Activated CD4-positive, alpha-beta T cell treated with anti-CD3 and anti-CD28 coated beads for 36 hours (primary cell): ENCODE measurements at regions of chr6 and their contacts with region 1.

Region 1: DNA sequence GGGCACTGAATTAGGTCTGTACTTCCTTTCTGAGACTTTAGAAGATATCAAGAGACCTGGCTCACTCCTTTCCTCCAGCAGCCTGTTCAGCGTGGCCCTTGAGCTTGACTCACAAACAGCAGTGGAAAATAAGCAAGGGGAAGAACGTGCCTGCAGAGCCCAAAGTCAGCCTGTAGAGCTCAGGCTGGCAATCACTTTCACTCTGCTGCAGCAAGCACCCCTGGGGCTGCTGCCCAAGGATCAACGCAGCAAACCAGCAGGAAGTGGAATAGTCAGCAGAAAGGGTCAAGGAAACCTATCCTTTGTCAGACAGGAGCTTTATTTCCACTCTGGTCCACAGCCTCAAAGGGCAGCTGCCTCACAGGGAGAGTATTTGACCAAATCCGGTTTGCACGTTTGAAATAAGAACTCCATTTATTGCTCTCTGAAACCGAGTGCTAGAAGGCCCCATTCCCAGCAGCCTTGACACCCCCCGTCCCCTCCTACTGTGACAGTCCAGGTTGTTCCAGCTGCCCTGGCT is 77.4 kb downstream of the PRDM1 start:
- DNase-seq: peak; percentile 80
- ATAC-seq: peak; percentile 59
- H3K4me3 Mint-ChIP-seq: peak overlapping the region; percentile 61
- H3K27ac Mint-ChIP-seq: peak overlapping the region; percentile 89
- H3K4me1 Mint-ChIP-seq: peaks cover 49% of the 10 kb centered on the region
- H3K27me3 Mint-ChIP-seq: peaks cover 2% of the 10 kb centered on the region

Region 2: GRCh38 chr6:105898286-105898685 is 265.2 kb before region 1 on chr6:
- CTCF ChIA-PET with region 1: no interaction called
- POLR2A ChIA-PET with region 1: no interaction called
- intact Hi-C with region 1: loop called in 1 of 2 experiments (anchors 1 kb)
- DNase-seq: peak; percentile 43
- ATAC-seq: peak; percentile 62
- H3K4me3 Mint-ChIP-seq: no peak overlapping the region
- H3K27ac Mint-ChIP-seq: no peak overlapping the region
- H3K4me1 Mint-ChIP-seq: peaks cover 24% of the 10 kb centered on the region
- H3K27me3 Mint-ChIP-seq: peaks cover 4% of the 10 kb centered on the region

Region 3: DNA sequence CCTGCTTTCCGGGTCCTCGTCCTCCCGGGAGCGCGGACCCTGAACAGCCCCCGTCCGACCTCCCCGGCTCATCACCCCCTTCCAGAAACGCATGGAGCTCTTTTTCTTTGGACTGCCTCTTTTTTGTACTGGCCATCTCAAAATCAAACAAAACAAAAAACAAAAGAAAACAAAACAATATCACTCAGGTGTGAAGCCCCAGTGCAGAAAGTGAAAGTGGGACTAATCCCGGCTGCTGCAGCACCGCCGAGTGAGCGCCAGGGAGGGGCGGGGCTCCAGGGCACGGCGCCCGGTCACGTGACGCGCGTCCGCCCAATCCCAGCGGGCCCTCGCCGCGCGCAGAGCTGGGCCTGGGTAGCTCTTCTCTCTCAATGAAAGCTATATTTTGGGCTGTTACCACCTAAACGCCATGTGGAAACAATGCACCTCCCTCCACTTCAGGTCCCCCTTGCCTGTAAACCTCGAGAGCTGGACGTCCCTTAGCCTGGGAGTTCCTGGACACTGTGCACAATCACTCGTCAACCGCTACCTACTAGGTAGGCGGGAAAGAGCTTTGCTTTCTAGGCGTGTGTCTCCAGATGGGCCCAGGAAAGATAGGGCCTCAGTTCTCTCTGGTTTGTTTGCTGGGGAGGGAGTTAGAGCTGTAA is 171.1 kb before region 1 on chr6:
- CTCF ChIA-PET with region 1: interaction called, 3 read pairs
- POLR2A ChIA-PET with region 1: no interaction called
- intact Hi-C with region 1: loop called in 1 of 2 experiments (anchors 1 kb)
- DNase-seq: peak; percentile 94
- ATAC-seq: peak; percentile 93
- H3K4me3 Mint-ChIP-seq: peak overlapping the region; percentile 88
- H3K27ac Mint-ChIP-seq: peak overlapping the region; percentile 91
- H3K4me1 Mint-ChIP-seq: peaks cover 32% of the 10 kb centered on the region
- H3K27me3 Mint-ChIP-seq: peaks cover 61% of the 10 kb centered on the region

Region 4: DNA sequence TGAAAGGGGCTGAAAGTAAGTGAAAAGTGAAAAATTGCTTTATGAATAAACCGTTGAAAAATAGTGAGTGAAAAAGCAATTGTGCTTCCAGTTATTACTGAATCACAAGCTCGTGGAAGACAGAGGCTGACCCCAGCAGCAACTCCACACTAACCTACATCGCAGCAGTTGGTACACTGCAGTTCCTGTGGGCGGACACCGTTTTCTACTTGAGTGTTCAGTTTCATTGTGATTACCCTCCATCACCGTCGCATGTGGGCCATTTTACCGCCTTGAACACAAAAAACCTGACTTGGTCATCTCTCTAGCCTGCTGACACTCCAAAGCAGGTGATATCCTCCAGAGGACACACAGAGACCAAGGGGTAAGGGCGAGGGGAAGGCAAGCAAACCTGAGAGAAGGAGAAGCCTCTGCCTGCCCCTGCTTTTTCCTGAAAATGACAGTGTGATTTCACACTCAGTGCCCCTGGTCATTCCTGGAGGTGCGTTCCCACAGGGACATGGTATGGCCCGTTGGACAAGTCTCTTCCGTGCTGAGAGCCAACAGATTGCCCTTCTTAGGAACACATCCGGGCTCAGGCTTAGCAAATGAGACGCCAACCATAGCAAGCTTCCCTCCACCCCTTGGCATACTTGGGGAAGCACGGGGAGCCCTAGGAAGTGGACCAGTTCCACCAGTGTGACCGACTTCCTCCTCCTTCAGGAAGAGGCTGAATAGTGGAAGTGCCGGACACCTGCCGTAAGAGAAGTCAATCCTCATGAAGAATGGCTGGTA is 48.8 kb before region 1 on chr6:
- CTCF ChIA-PET with region 1: interaction called, 6 read pairs
- POLR2A ChIA-PET with region 1: interaction called, 5 read pairs
- intact Hi-C with region 1: loop called (anchors 1 kb)
- DNase-seq: peak; percentile 90
- ATAC-seq: peak; percentile 85
- H3K4me3 Mint-ChIP-seq: peak overlapping the region; percentile 38
- H3K27ac Mint-ChIP-seq: peak overlapping the region; percentile 85
- H3K4me1 Mint-ChIP-seq: peaks cover 83% of the 10 kb centered on the region
- H3K27me3 Mint-ChIP-seq: peaks cover 24% of the 10 kb centered on the region

Region 5: DNA sequence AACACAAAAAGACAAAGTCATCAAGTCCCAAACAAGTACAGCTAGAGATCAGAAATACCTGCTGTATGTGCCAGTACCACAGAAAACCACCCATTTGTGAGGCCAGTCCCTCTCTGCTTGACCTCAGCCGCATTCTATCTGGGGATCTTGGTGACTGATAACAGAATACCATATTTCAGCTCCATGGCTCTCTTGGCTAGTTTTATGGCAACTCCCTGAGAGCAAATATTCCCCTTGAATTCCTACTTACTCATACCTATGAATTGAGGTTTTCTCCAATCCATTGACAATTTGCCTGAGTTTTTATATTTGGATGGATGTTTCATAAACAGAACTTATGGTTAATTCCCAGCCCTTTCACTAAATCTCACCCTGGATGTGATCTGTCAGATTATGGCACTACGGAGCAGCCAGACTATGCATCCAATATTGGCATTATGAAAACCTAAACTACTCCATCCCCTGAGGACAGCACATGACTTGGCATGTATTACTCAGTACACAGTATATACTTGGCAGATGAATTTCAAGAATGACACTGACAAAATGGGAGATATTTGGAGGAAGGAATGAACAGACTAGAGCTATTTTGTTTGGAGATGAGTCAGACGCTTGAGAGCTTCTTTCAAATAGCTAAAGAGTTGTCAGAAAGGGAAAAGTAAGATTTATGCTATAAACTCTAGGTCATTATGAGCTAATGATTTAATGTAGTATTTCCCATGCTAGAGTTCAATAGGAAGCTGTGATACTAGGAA is 18.3 kb after region 1 on chr6:
- CTCF ChIA-PET with region 1: interaction called, 8 read pairs
- POLR2A ChIA-PET with region 1: interaction called, 9 read pairs
- intact Hi-C with region 1: loop called (anchors 1 kb)
- DNase-seq: no peak
- ATAC-seq: peak; percentile 64
- H3K4me3 Mint-ChIP-seq: no peak overlapping the region
- H3K27ac Mint-ChIP-seq: peak overlapping the region; percentile 44
- H3K4me1 Mint-ChIP-seq: peaks cover 48% of the 10 kb centered on the region
- H3K27me3 Mint-ChIP-seq: peaks cover 4% of the 10 kb centered on the region

Region 6: GRCh38 chr6:106194949-106195921 is 31.7 kb after region 1 on chr6:
- CTCF ChIA-PET with region 1: no interaction called
- POLR2A ChIA-PET with region 1: no interaction called
- intact Hi-C with region 1: loop called in 1 of 2 experiments (anchors 1 kb)
- DNase-seq: no peak
- ATAC-seq: peak; percentile 92
- H3K4me3 Mint-ChIP-seq: peak overlapping the region; percentile 37
- H3K27ac Mint-ChIP-seq: peak overlapping the region; percentile 79
- H3K4me1 Mint-ChIP-seq: peaks cover 44% of the 10 kb centered on the region
- H3K27me3 Mint-ChIP-seq: no peaks in the 10 kb centered on the region

Region 7: GRCh38 chr6:106339334-106340029 is 176.0 kb after region 1 on chr6:
- CTCF ChIA-PET with region 1: no interaction called
- POLR2A ChIA-PET with region 1: no interaction called
- intact Hi-C with region 1: no loop called
- DNase-seq: peak; percentile 68
- ATAC-seq: peak; percentile 98
- H3K4me3 Mint-ChIP-seq: no peak overlapping the region
- H3K27ac Mint-ChIP-seq: no peak overlapping the region
- H3K4me1 Mint-ChIP-seq: peaks cover 5% of the 10 kb centered on the region
- H3K27me3 Mint-ChIP-seq: peaks cover 34% of the 10 kb centered on the region